ENCODE measurements at regions of chr3 and their contacts with region 1.

Region 1: DNA sequence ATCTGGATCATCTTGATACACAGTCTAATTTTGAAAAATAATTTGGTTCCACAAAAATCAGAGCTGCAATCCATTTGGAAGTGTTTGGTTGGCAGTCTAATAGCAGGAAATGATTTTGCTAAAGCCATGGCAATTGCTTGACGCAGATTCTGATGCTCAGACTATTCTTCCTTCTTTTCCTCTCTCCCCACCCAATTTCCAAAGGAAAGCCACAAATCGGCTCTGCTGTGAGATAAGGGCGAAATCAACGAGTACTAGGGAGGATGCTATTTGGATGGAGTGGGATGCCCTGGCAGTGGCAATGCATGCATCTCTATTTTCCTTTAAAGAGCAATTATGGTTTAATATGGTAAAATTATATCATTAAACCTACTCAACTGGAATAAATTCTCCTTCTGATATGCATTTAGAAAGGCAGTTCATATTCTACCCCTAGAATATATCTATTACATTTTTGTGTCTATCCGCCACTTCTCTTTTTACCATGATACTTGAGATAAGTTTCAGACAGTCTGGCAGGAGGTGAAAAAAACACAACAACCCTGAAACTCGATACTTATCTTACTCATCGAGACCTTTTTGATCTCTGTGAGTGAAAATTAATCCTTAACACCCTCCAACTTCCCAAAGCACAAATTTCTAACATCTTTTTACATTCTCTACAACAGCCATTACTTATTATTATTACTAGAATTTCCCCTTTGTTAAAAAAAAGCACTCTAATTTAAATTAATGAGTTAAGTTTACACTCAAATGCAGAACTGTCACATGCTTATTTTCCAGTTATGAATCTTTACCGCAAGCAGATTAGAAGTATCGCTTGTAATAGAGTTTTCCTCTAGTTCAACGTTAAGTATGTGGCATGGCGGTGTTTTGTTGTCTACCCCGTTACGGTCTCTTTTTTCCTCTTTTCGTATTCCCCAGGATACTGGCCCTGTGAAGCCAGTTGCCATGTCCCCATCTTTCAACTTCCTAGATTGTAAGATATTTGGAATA is 433.3 kb downstream of the FOXP1 start:
- DNase-seq: no peak
- H3K4me3 ChIP-seq: no peak overlapping the region
- H3K4me3 Mint-ChIP-seq: no peak overlapping the region
- H3K27ac Mint-ChIP-seq: no peak overlapping the region
- H3K4me1 ChIP-seq: peaks cover 59% of the 10 kb centered on the region
- H3K4me1 Mint-ChIP-seq: peaks cover 49% of the 10 kb centered on the region
- H3K27me3 ChIP-seq: no peaks in the 10 kb centered on the region
- H3K27me3 Mint-ChIP-seq: no peaks in the 10 kb centered on the region
- CTCF ChIP-seq: no peak

Region 2: DNA sequence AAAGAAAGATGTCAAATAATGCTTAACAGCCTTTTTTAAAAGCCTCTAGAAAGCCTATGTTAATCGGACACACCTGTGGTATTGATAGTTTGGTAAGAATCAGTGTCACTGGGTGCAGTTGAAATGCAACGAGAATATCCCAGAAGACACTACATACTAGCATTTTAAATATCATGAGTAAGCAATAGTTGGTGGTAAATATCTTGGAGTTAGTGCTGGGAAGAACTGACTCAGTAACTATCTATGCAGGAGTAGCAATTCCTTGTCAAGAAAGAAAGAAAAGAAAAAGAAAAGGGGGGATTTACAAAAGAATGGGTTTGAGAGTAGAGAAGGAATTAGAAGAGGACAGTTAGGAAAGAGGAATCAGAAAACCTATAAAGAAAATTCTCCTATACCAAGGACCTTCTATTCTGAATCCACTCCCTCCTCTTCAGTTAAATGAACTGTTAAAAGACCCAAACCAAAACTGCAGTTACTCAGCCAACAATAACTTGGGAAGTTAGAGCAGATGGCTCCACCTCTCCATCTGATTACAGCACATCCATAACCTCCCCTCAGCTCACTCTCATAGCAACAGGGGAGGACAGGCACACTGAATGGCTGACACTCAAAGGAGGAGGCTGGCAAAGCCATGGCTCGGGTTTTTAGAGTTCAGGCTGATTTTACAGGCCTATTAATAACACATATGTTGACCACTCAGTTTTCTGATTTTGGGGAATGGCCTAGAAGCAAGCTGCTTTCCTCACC is 630.2 kb before region 1 on chr3:
- CTCF ChIA-PET with region 1: no interaction called
- POLR2A ChIA-PET with region 1: no interaction called
- intact Hi-C with region 1: no loop called
- DNase-seq: no peak
- H3K4me3 ChIP-seq: no peak overlapping the region
- H3K4me3 Mint-ChIP-seq: no peak overlapping the region
- H3K27ac Mint-ChIP-seq: no peak overlapping the region
- H3K4me1 ChIP-seq: no peaks in the 10 kb centered on the region
- H3K4me1 Mint-ChIP-seq: no peaks in the 10 kb centered on the region
- H3K27me3 ChIP-seq: no peaks in the 10 kb centered on the region
- H3K27me3 Mint-ChIP-seq: peaks cover 3% of the 10 kb centered on the region
- CTCF ChIP-seq: no peak

Region 3: DNA sequence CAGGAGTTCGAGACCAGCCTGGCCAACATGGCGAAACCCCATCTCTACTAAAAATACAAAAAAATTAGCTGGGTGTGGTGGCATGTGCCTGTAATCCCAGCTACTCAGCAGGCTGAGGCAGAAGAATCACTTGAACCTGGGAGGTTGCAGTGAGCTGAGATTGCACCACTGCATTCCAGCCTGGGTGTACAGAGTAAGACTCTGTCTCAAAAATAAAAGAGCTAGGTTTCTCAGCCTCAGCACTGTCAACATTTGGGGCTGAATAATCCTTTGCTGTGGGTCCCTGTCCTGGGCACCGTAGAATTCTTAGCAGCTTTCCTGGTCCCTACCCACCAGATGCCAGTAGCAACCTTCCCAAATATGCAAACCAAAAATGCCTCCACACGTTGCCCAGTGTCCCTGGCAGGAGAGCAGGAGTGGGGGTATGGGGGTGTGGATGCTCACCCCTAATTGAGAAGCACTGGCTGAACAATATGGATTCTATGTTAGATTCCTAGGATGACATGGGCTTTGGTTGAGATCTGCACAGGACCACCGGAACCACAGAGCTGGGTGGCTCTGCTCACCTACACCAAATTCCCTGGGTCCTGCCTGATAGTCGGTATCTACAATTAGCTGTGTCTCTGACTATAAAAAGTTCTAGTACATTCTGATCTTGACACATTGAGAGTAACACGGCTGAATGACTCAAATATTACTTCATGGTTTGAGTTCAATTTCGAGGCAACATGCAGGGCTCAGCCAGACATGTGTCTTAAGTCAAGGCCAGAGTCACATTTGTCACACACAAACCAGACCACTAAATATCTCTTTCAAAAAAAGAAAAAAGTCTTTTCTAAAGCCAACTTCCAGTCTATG is 260.9 kb before region 1 on chr3:
- CTCF ChIA-PET with region 1: no interaction called
- POLR2A ChIA-PET with region 1: no interaction called
- intact Hi-C with region 1: no loop called
- DNase-seq: no peak
- H3K4me3 ChIP-seq: no peak overlapping the region
- H3K4me3 Mint-ChIP-seq: no peak overlapping the region
- H3K27ac Mint-ChIP-seq: no peak overlapping the region
- H3K4me1 ChIP-seq: no peaks in the 10 kb centered on the region
- H3K4me1 Mint-ChIP-seq: no peaks in the 10 kb centered on the region
- H3K27me3 ChIP-seq: no peaks in the 10 kb centered on the region
- H3K27me3 Mint-ChIP-seq: no peaks in the 10 kb centered on the region
- CTCF ChIP-seq: no peak

Region 4: GRCh38 chr3:71076361-71077002 is 73.8 kb before region 1 on chr3:
- CTCF ChIA-PET with region 1: no interaction called
- POLR2A ChIA-PET with region 1: no interaction called
- intact Hi-C with region 1: no loop called
- DNase-seq: no peak
- H3K4me3 ChIP-seq: no peak overlapping the region
- H3K4me3 Mint-ChIP-seq: no peak overlapping the region
- H3K27ac Mint-ChIP-seq: no peak overlapping the region
- H3K4me1 ChIP-seq: peaks cover 24% of the 10 kb centered on the region
- H3K4me1 Mint-ChIP-seq: peaks cover 37% of the 10 kb centered on the region
- H3K27me3 ChIP-seq: no peaks in the 10 kb centered on the region
- H3K27me3 Mint-ChIP-seq: no peaks in the 10 kb centered on the region
- CTCF ChIP-seq: no peak

Region 5: GRCh38 chr3:71121429-71122167 is 28.7 kb before region 1 on chr3:
- CTCF ChIA-PET with region 1: interaction called, 4 read pairs
- POLR2A ChIA-PET with region 1: interaction called, 3 read pairs
- intact Hi-C with region 1: loop called (anchors 1 kb)
- DNase-seq: no peak
- H3K4me3 ChIP-seq: no peak overlapping the region
- H3K4me3 Mint-ChIP-seq: no peak overlapping the region
- H3K27ac Mint-ChIP-seq: peak overlapping the region; percentile 71
- H3K4me1 ChIP-seq: peaks cover 57% of the 10 kb centered on the region
- H3K4me1 Mint-ChIP-seq: peaks cover 52% of the 10 kb centered on the region
- H3K27me3 ChIP-seq: no peaks in the 10 kb centered on the region
- H3K27me3 Mint-ChIP-seq: no peaks in the 10 kb centered on the region
- CTCF ChIP-seq: no peak

Region 6: DNA sequence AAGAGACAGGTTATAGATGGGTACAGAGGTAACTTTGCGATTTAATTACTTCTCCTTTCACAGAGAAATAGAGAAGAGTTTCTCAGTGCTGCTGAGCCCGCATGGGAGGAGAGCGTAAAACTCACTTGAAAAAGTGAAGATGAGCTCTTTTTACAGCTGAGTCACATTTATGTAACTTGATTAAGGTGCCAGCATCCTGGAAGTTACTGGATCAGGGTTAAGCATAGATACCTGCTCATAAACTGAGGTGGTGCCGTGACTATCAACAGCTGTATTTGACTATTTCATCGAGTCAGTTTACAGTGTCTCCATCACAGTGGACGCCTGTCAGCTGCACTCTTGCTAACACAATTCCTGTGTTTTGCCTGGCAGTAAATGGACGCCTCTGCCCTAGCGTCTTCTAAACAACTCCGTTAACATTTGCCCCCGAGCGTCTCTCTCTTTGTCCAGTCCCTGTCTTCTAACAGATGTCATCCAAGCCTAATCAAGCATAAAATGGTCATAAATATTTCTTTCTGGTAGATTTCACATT is 18.7 kb after region 1 on chr3:
- CTCF ChIA-PET with region 1: no interaction called
- POLR2A ChIA-PET with region 1: no interaction called
- intact Hi-C with region 1: loop called (anchors 1 kb)
- DNase-seq: no peak
- H3K4me3 ChIP-seq: peak overlapping the region; percentile 1
- H3K4me3 Mint-ChIP-seq: peak overlapping the region; percentile 58
- H3K27ac Mint-ChIP-seq: peak overlapping the region; percentile 83
- H3K4me1 ChIP-seq: peaks cover 81% of the 10 kb centered on the region
- H3K4me1 Mint-ChIP-seq: peaks cover 66% of the 10 kb centered on the region
- H3K27me3 ChIP-seq: no peaks in the 10 kb centered on the region
- H3K27me3 Mint-ChIP-seq: no peaks in the 10 kb centered on the region
- CTCF ChIP-seq: no peak

Region 7: DNA sequence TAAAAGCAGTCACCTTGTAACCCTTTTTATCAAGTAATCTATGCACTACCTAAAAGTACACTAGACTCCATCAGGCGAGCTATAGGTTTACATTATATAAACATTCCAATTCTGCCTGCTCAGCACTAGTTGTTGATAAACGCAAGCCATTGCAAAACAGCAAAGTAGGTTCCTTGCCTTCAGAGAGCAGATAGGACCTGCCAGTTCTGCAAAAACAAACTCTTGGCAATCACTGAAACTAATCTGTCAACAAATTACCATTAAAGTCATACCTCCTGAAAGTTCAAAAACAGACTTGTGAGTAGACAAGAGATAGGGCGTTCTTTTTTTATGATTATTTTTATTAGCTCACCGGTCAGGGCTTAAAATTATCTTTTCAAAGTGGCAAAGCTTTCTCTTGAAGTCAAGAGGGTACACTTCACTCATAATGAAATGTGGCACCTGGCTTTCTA is 40.8 kb after region 1 on chr3:
- CTCF ChIA-PET with region 1: interaction called, 3 read pairs
- POLR2A ChIA-PET with region 1: no interaction called
- intact Hi-C with region 1: loop called (anchors 1 kb)
- DNase-seq: peak; percentile 75 to 77
- H3K4me3 ChIP-seq: no peak overlapping the region
- H3K4me3 Mint-ChIP-seq: no peak overlapping the region
- H3K27ac Mint-ChIP-seq: peak overlapping the region; percentile 74
- H3K4me1 ChIP-seq: peaks cover 59% of the 10 kb centered on the region
- H3K4me1 Mint-ChIP-seq: peaks cover 52% of the 10 kb centered on the region
- H3K27me3 ChIP-seq: no peaks in the 10 kb centered on the region
- H3K27me3 Mint-ChIP-seq: no peaks in the 10 kb centered on the region
- CTCF ChIP-seq: peak in 1 of 2 experiments; percentile 5

Region 8: GRCh38 chr3:71217640-71218222 is 67.5 kb after region 1 on chr3:
- CTCF ChIA-PET with region 1: no interaction called
- POLR2A ChIA-PET with region 1: no interaction called
- intact Hi-C with region 1: no loop called
- DNase-seq: no peak
- H3K4me3 ChIP-seq: no peak overlapping the region
- H3K4me3 Mint-ChIP-seq: no peak overlapping the region
- H3K27ac Mint-ChIP-seq: peak overlapping the region; percentile 18
- H3K4me1 ChIP-seq: no peaks in the 10 kb centered on the region
- H3K4me1 Mint-ChIP-seq: peaks cover 6% of the 10 kb centered on the region
- H3K27me3 ChIP-seq: no peaks in the 10 kb centered on the region
- H3K27me3 Mint-ChIP-seq: no peaks in the 10 kb centered on the region
- CTCF ChIP-seq: no peak